ENCODE measurements at regions of chr1 and their contacts with region 1.

Region 1: DNA sequence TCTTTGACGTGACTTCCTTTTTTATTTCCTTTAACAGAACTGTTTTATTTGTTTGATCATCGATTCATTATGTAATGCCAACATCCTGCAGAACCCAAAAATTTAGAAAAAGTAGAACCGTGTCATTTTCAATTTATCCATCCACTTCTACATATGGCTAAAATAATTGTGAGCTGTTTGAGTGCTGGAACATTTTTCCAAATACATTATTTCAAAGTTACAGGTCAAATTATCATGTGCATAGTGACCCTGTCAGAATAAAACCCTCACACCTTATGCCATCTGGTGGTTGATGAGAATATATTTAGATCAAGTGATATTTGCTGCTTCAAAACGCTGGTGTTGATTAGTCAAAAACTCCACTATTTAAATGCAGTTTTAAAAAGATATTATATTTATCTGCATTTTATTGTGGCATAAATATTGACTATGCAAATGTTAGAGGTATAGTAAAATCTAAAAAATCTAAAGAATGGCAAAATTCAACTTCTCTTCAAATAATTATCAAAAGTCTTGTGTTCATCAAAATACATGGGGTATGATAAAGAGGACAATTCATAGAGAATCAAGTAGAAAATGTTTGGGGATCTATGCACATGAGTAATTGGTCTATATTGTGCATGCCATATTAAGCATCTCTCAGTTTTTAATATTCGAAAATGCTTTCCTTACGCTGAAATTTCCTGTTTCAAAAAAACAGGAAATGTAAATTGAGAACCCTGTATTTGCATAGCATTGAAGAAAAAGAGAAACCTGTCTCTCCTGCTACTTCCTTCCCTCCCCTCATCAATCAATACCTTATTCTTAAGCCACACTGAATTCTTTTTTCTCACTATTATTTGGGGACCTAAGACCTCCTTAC is 39.7 kb downstream of the UBE2U start:
- DNase-seq: peak in 3 of 4 experiments; percentile 7 to 19 (median 10)
- ATAC-seq: 0 out of 3 replicates have a peak, but pooled peaks have one; percentile 36
- H3K4me3 ChIP-seq: no peak overlapping the region
- H3K27ac ChIP-seq: no peak overlapping the region
- H3K4me1 ChIP-seq: no peaks in the 10 kb centered on the region
- H3K27me3 ChIP-seq: no peaks in the 10 kb centered on the region; a peak in 1 of 5 replicates
- CTCF ChIP-seq: peak in 2 of 3 experiments; percentile 15 to 43; a peak in 3 of 6 replicates
- EP300 ChIP-seq: no peak
- POLR2A ChIP-seq: no peak
- RAD21 ChIP-seq: peak; percentile 35 to 57; a peak in 3 of 4 replicates

Region 2: GRCh38 chr1:63615768-63616420 is 627.2 kb before region 1 on chr1:
- CTCF ChIA-PET with region 1: interaction called, 11 read pairs
- POLR2A ChIA-PET with region 1: no interaction called
- in situ Hi-C with region 1: loop called (anchors 5 kb)
- intact Hi-C with region 1: loop called (anchors 2 kb)
- DNase-seq: peak; percentile 61 to 73 (median 70)
- ATAC-seq: peak; percentile 80
- H3K4me3 ChIP-seq: no peak overlapping the region
- H3K27ac ChIP-seq: no peak overlapping the region
- H3K4me1 ChIP-seq: no peaks in the 10 kb centered on the region
- H3K27me3 ChIP-seq: peaks cover 2 to 10% of the 10 kb centered on the region in 2 experiments; a peak in 2 of 5 replicates
- CTCF ChIP-seq: peak; percentile 54 to 80 (median 61); a peak in 5 of 6 replicates
- EP300 ChIP-seq: no peak
- POLR2A ChIP-seq: no peak
- RAD21 ChIP-seq: peak; percentile 70 to 79

Region 3: GRCh38 chr1:63674238-63674864 is 568.8 kb before region 1 on chr1:
- CTCF ChIA-PET with region 1: interaction called, 3 read pairs
- POLR2A ChIA-PET with region 1: no interaction called
- in situ Hi-C with region 1: no loop called
- intact Hi-C with region 1: loop called (anchors 5 kb)
- DNase-seq: peak; percentile 41 to 59 (median 50)
- ATAC-seq: peak; percentile 96
- H3K4me3 ChIP-seq: no peak overlapping the region
- H3K27ac ChIP-seq: no peak overlapping the region
- H3K4me1 ChIP-seq: no peaks in the 10 kb centered on the region
- H3K27me3 ChIP-seq: peaks cover 2 to 23% of the 10 kb centered on the region in 2 experiments; a peak in 2 of 5 replicates
- CTCF ChIP-seq: peak; percentile 59 to 68 (median 62)
- EP300 ChIP-seq: no peak
- POLR2A ChIP-seq: no peak
- RAD21 ChIP-seq: peak; percentile 34 to 65; a peak in 3 of 4 replicates

Region 4: GRCh38 chr1:63691701-63692425 is 551.3 kb before region 1 on chr1:
- CTCF ChIA-PET with region 1: interaction called, 7 read pairs
- POLR2A ChIA-PET with region 1: no interaction called
- in situ Hi-C with region 1: no loop called
- intact Hi-C with region 1: loop called (anchors 5 kb)
- DNase-seq: peak; percentile 47 to 61 (median 54)
- ATAC-seq: peak; percentile 98
- H3K4me3 ChIP-seq: no peak overlapping the region
- H3K27ac ChIP-seq: no peak overlapping the region
- H3K4me1 ChIP-seq: no peaks in the 10 kb centered on the region
- H3K27me3 ChIP-seq: no peaks in the 10 kb centered on the region
- CTCF ChIP-seq: peak; percentile 62 to 83 (median 71); a peak in 5 of 6 replicates
- EP300 ChIP-seq: peak; percentile 65
- POLR2A ChIP-seq: no peak
- RAD21 ChIP-seq: peak; percentile 56 to 78

Region 5: GRCh38 chr1:63902844-63903589 is 340.1 kb before region 1 on chr1:
- CTCF ChIA-PET with region 1: no interaction called
- POLR2A ChIA-PET with region 1: no interaction called
- in situ Hi-C with region 1: no loop called
- intact Hi-C with region 1: no loop called
- DNase-seq: no peak
- ATAC-seq: no peak
- H3K4me3 ChIP-seq: no peak overlapping the region
- H3K27ac ChIP-seq: no peak overlapping the region
- H3K4me1 ChIP-seq: no peaks in the 10 kb centered on the region
- H3K27me3 ChIP-seq: no peaks in the 10 kb centered on the region
- CTCF ChIP-seq: no peak
- EP300 ChIP-seq: no peak
- POLR2A ChIP-seq: no peak
- RAD21 ChIP-seq: no peak

Region 6: GRCh38 chr1:64891448-64891825 is 648.3 kb after region 1 on chr1:
- CTCF ChIA-PET with region 1: no interaction called
- POLR2A ChIA-PET with region 1: no interaction called
- in situ Hi-C with region 1: no loop called
- intact Hi-C with region 1: no loop called
- DNase-seq: no peak
- ATAC-seq: no peak
- H3K4me3 ChIP-seq: no peak overlapping the region
- H3K27ac ChIP-seq: no peak overlapping the region
- H3K4me1 ChIP-seq: peaks cover 13 to 35% of the 10 kb centered on the region in 2 experiments; a peak in 4 of 5 replicates
- H3K27me3 ChIP-seq: no peaks in the 10 kb centered on the region
- CTCF ChIP-seq: no peak
- EP300 ChIP-seq: no peak
- POLR2A ChIP-seq: no peak
- RAD21 ChIP-seq: no peak